Activated naive CD4-positive, alpha-beta T cell treated with anti-CD3 and anti-CD28 coated beads for 36 hours (primary cell): ENCODE measurements at regions of chr1 and their contacts with region 1.

Region 1: GRCh38 chr1:199173356-199173755 is 534.5 kb downstream of the PTPRC start:
- DNase-seq: peak; percentile 44
- H3K4me3 Mint-ChIP-seq: no peak overlapping the region
- H3K27ac Mint-ChIP-seq: no peak overlapping the region
- H3K4me1 Mint-ChIP-seq: peaks cover 45% of the 10 kb centered on the region
- H3K27me3 Mint-ChIP-seq: peaks cover 3% of the 10 kb centered on the region

Region 2: GRCh38 chr1:197775282-197776262 is 1397.8 kb before region 1 on chr1 and contains the start of gene DENND1B:
- CTCF ChIA-PET with region 1: no interaction called
- intact Hi-C with region 1: loop called (anchors 2 kb)
- DNase-seq: peak; percentile 84
- H3K4me3 Mint-ChIP-seq: peak within 1 kb of the TSS; percentile 74
- H3K27ac Mint-ChIP-seq: peak within 1 kb of the TSS; percentile 99
- H3K4me1 Mint-ChIP-seq: peaks cover 64% of the 10 kb centered on the region
- H3K27me3 Mint-ChIP-seq: no peaks in the 10 kb centered on the region
- total RNA-seq, gene DENND1B: 8.9 to 9.7 TPM

Region 3: GRCh38 chr1:198465201-198466144 is 707.9 kb before region 1 on chr1:
- CTCF ChIA-PET with region 1: no interaction called
- intact Hi-C with region 1: loop called (anchors 5 kb)
- DNase-seq: no peak
- H3K4me3 Mint-ChIP-seq: no peak overlapping the region
- H3K27ac Mint-ChIP-seq: no peak overlapping the region
- H3K4me1 Mint-ChIP-seq: peaks cover 13% of the 10 kb centered on the region
- H3K27me3 Mint-ChIP-seq: no peaks in the 10 kb centered on the region

Region 4: DNA sequence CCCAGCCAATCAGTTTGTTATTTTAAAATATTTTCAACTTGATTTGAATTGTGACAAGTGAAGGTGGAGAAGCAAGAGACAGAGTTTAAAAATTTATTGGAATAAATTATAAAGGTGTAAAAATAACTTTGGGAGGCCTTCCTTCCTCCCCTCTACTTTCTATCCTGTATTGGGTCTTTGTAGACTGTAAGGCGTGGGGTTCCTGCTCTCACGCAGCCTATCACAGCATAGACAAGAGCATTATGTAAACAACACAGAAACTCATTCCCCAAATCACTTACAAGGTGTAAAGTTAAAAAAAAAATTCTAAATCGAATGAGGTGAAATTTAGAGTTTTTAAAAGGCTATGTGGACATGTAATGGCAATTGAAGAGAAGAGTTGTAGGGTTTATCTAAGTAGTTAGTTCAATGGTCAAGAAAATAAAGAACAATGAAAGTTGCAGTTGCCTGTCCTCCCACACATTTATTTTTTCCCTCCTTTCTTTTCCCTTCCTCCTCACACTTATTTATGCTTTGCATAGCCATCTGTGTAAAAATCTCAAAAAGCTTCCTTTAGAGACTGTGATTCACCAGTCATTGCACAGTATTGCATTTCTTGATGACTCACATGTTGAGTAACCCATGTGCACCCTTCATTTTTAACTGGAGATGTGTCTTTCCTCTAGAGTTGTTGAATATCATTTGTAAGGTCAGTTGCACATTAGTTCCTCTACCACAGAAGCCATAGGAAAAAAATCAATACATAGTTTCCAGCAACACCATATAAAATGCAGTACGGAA is 292.3 kb before region 1 on chr1:
- CTCF ChIA-PET with region 1: no interaction called
- intact Hi-C with region 1: loop called (anchors 2 kb)
- DNase-seq: peak; percentile 40
- H3K4me3 Mint-ChIP-seq: no peak overlapping the region
- H3K27ac Mint-ChIP-seq: peak overlapping the region; percentile 32
- H3K4me1 Mint-ChIP-seq: peaks cover 33% of the 10 kb centered on the region
- H3K27me3 Mint-ChIP-seq: no peaks in the 10 kb centered on the region

Region 5: GRCh38 chr1:198959032-198959431 is 214.3 kb before region 1 on chr1:
- CTCF ChIA-PET with region 1: no interaction called
- intact Hi-C with region 1: no loop called
- DNase-seq: no peak
- H3K4me3 Mint-ChIP-seq: no peak overlapping the region
- H3K27ac Mint-ChIP-seq: peak overlapping the region; percentile 10
- H3K4me1 Mint-ChIP-seq: peaks cover 24% of the 10 kb centered on the region
- H3K27me3 Mint-ChIP-seq: no peaks in the 10 kb centered on the region

Region 6: DNA sequence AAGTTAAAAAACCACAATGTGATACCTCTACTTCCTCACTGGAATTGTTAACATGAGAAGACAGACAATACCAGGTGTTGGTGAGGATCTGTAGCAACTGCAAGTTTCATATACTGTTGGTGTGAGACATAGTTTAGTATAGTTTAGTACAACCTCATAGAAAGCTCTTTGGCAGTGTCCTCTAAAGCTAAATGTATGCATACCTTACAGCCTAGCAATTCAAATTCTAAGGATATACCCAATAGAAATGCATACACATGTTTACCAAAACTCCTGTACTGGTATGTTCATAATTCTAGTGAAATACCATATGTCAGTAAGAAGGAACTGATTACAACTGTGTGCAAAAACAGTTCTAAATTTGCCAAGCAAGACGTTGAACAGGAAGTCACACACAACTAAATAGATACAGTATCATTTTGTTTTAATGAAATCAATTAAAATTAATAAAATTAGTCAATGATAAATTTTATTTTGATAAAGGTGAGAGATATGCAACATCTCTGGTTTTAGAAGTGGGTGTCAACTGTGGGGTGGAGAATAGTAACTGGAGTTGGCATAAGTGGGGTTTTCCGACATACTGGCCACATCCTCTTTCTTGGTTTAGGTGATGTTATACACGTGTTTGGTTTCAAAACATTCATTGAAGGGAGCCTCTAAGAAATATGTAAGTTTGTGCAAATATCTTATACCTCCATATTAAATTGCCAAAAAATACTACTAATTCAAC is 83.8 kb before region 1 on chr1:
- CTCF ChIA-PET with region 1: no interaction called
- intact Hi-C with region 1: loop called (anchors 1 kb)
- DNase-seq: peak; percentile 58
- H3K4me3 Mint-ChIP-seq: no peak overlapping the region
- H3K27ac Mint-ChIP-seq: no peak overlapping the region
- H3K4me1 Mint-ChIP-seq: peaks cover 14% of the 10 kb centered on the region
- H3K27me3 Mint-ChIP-seq: no peaks in the 10 kb centered on the region

Region 7: DNA sequence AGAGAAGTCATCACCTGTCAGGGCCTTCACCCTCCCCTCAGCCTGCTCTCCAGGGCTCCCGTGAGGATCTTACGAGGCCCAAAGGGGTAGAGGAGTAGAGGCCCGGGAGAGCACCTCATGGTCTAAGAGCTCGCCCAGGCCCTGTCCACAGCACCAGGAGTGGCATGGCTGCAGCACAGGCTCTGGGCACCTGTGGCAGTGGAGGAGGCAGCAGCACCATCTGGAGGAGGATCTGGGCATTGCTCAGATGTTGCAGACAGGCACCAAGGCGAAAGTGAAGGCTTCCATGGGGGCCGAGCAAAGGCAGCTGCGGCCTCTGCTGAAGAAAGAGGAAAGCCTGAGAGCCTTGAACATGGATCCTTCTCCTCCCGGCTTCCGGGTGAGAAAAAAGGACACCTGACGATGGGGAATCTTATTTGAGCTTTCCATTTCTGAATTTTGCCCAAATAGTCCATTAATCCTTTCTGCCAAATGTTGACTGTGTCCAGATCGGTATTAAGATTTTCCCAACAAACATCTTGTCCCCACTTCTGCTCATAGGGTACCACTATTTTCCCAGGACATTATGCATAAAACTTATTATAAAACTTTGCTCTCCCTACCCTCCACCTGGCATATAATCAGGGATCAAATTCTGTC is 70.2 kb after region 1 on chr1:
- CTCF ChIA-PET with region 1: interaction called, 5 read pairs
- intact Hi-C with region 1: loop called (anchors 1 kb)
- DNase-seq: peak; percentile 86
- H3K4me3 Mint-ChIP-seq: no peak overlapping the region
- H3K27ac Mint-ChIP-seq: no peak overlapping the region
- H3K4me1 Mint-ChIP-seq: no peaks in the 10 kb centered on the region
- H3K27me3 Mint-ChIP-seq: peaks cover 9% of the 10 kb centered on the region

Region 8: GRCh38 chr1:200154069-200154767 is 980.9 kb after region 1 on chr1:
- CTCF ChIA-PET with region 1: no interaction called
- intact Hi-C with region 1: loop called (anchors 1 kb)
- DNase-seq: peak; percentile 74
- H3K4me3 Mint-ChIP-seq: peak overlapping the region; percentile 10
- H3K27ac Mint-ChIP-seq: peak overlapping the region; percentile 87
- H3K4me1 Mint-ChIP-seq: peaks cover 45% of the 10 kb centered on the region
- H3K27me3 Mint-ChIP-seq: no peaks in the 10 kb centered on the region